GM23248 (cell line): ENCODE measurements at regions of chr16 and their contacts with region 1.

Region 1: DNA sequence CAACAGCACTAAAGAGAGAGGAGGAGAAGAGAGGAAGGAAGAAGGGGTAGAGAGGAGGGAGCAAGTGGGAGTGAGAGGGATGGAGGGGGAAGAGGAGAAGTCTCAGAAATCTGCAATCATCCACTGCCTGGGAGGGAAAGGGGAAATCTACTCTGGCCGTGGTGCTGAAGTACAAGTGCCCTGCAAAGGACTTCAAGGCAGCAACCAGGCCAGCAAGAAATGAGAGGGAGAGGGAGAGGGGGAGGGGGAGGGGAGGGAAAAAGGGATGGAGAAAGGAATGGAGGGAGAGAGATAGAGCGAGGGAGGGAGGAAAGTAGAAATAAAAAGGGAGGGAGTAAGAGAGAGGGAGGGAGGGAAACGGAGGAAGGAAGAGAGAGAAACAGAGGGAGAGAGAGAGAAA is 130.8 kb upstream of the EEF2KMT start:
- DNase-seq: no peak
- H3K4me3 ChIP-seq: no peak overlapping the region
- H3K27ac ChIP-seq: no peak overlapping the region
- H3K4me1 ChIP-seq: no peaks in the 10 kb centered on the region
- H3K27me3 ChIP-seq: no peaks in the 10 kb centered on the region

Region 2: GRCh38 chr16:6643080-6643686 is 1414.8 kb after region 1 on chr16:
- in situ Hi-C with region 1: loop called (anchors 25 kb)
- DNase-seq: peak; percentile 57
- H3K4me3 ChIP-seq: no peak overlapping the region
- H3K27ac ChIP-seq: no peak overlapping the region
- H3K4me1 ChIP-seq: no peaks in the 10 kb centered on the region
- H3K27me3 ChIP-seq: peaks cover 6% of the 10 kb centered on the region; the same call in 1 of the 2 replicates